Panc1 (cell line): ENCODE measurements at regions of chr5 and their contacts with region 1.

Region 1: GRCh38 chr5:112779531-112779930 is 41.8 kb downstream of the APC start:
- DNase-seq: no peak
- ATAC-seq: no peak
- H3K4me3 ChIP-seq: no peak overlapping the region
- H3K27ac ChIP-seq: no peak overlapping the region
- H3K4me1 ChIP-seq: no peaks in the 10 kb centered on the region
- H3K27me3 ChIP-seq: no peaks in the 10 kb centered on the region
- CTCF ChIP-seq: no peak

Region 2: DNA sequence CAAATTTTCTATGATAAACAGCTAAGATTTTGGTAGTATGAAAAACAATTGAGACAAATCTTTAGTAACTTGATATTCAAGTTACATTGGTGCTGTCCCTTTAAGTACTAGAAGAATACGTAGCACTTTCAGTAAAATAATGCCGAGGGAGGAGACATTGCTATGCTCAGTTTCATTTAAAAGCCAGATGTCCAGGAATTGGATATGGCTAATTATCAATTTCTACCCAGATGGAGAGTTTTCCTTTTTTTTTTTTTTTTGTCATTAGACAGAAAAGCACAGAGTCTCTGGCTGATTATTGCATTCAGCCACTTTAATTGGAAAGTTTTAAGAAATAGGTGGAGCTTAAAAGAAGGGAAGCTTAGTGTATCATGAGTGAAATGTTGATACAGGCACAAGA is 82.2 kb before region 1 on chr5:
- CTCF ChIA-PET with region 1: interaction called, 11 read pairs
- POLR2A ChIA-PET with region 1: no interaction called
- in situ Hi-C with region 1: no loop called
- intact Hi-C with region 1: no loop called
- DNase-seq: no peak
- ATAC-seq: no peak
- H3K4me3 ChIP-seq: no peak overlapping the region
- H3K27ac ChIP-seq: no peak overlapping the region
- H3K4me1 ChIP-seq: no peaks in the 10 kb centered on the region
- H3K27me3 ChIP-seq: no peaks in the 10 kb centered on the region; the same call in 1 of the 2 replicates
- CTCF ChIP-seq: no peak